ENCODE measurements at regions of chr9 and their contacts with region 1.

Region 1: GRCh38 chr9:121692606-121693387 is 41.4 kb downstream of the DAB2IP start:
- DNase-seq: no peak

Region 2: DNA sequence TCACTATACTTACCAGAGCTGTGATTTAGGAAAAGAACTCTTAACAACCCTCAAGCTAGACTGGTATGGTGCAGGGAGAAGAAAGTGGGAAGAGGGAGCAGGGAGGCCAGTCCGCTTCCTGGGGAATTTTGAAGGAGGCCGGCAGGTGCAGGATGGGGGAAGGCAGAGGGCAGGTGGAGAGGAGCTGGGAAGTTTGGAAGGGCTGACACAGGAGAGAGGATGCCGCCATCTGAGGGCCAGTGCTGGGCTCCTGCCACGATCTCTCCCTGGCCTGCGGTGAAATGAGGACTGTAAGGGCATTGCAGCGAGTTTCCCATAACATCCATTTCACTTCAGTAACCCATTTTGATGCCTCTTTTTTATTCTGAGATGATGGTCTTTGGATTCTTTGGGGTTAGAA is 32.4 kb before region 1 on chr9:
- intact Hi-C with region 1: loop called in 1 of 2 experiments (anchors 1 kb)
- DNase-seq: peak; percentile 37

Region 3: DNA sequence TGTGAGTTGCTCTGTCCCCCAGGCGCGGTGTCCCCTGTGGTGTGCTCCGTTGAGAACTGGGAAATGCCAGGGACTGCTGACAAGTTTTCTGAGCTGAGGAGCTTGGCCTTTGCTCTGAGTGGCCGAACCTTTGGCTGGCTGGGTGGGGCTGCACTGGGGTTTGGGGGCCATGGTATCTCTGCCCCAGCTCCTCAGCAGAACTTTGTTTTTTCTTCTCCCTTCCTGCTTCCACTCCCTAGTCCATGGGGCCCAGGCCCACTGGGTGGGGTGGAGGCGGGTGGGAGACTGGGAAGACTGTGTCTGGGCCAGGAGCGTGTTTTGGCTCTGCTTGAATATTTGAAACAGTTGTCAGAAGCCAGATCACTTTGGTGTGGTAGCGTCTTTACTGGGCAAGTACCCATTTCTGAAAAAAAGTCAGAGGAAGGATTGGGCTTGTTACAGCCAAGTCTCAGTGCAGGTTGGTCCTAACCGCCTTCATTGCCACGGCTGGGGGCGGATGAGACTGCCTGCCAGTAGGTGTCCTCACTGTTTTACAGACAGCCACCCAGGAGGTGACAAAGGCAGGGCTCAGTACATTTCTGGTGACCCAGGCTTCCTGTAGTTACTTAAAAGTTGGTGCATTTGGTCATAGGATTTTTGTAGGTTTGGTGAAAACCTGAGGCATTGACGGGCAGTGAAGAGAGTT is 51.3 kb after region 1 on chr9:
- intact Hi-C with region 1: no loop called
- DNase-seq: no peak

Measured in posterior vena cava (tissue), 2 donors.